Left ventricle myocardium inferior (tissue), 1 donor: ENCODE measurements at regions of chr1 and their contacts with region 1.

Region 1: GRCh38 chr1:70436622-70437251 is 25.7 kb downstream of the CTH start:
- DNase-seq: no peak
- H3K4me3 ChIP-seq: no peak overlapping the region
- H3K27ac ChIP-seq: no peak overlapping the region
- H3K4me1 ChIP-seq: peaks cover 12% of the 10 kb centered on the region
- H3K27me3 ChIP-seq: no peaks in the 10 kb centered on the region
- CTCF ChIP-seq: peak; percentile 51

Region 2: DNA sequence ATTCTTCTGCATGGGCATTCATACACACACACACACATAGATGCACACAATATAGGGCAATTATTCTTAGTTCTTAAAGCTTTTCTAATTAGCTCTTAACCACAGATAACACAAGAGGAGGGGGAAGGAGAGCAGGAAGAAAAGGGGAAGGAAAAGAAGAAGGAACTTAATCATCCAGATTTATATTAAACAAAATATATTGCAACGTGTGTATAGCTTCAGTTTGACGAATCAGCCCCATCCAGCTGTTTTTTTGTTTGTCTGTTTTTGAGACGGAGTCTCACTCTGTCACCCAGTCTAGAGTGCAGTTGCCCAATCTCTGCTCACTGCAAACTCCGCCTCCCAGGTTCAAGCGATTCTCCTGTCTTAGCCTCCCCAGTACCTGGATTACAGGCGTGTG is 60.5 kb before region 1 on chr1:
- intact Hi-C with region 1: no loop called
- DNase-seq: no peak
- H3K4me3 ChIP-seq: no peak overlapping the region
- H3K27ac ChIP-seq: no peak overlapping the region
- H3K4me1 ChIP-seq: no peaks in the 10 kb centered on the region
- H3K27me3 ChIP-seq: no peaks in the 10 kb centered on the region
- CTCF ChIP-seq: no peak

Region 3: GRCh38 chr1:70509996-70510876 is 73.5 kb after region 1 on chr1:
- intact Hi-C with region 1: loop called (anchors 10 kb)
- DNase-seq: no peak
- H3K4me3 ChIP-seq: no peak overlapping the region
- H3K27ac ChIP-seq: no peak overlapping the region
- H3K4me1 ChIP-seq: no peaks in the 10 kb centered on the region
- H3K27me3 ChIP-seq: no peaks in the 10 kb centered on the region
- CTCF ChIP-seq: peak; percentile 73